Activated CD4-positive, alpha-beta memory T cell treated with anti-CD3 and anti-CD28 coated beads, Interleukin-2, amount 10 ng/mL, durations not matched to agents 7 days and 5 days (primary cell): ENCODE measurements at regions of chr11 and their contacts with region 1.

Region 1: GRCh38 chr11:10307442-10308207 is 2.8 kb downstream of the ADM start:
- DNase-seq: peak; percentile 82
- H3K4me3 Mint-ChIP-seq: peak overlapping the region; percentile 94
- H3K27ac Mint-ChIP-seq: peak overlapping the region; percentile 72
- H3K4me1 Mint-ChIP-seq: peaks cover 65% of the 10 kb centered on the region
- H3K27me3 Mint-ChIP-seq: peaks cover 72% of the 10 kb centered on the region

Region 2: GRCh38 chr11:9757809-9758636 is 549.6 kb before region 1 on chr11:
- CTCF ChIA-PET with region 1: interaction called, 27 read pairs
- POLR2A ChIA-PET with region 1: interaction called, 14 read pairs
- DNase-seq: peak; percentile 91
- H3K4me3 Mint-ChIP-seq: peak overlapping the region; percentile 70
- H3K27ac Mint-ChIP-seq: peak overlapping the region; percentile 44
- H3K4me1 Mint-ChIP-seq: peaks cover 44% of the 10 kb centered on the region
- H3K27me3 Mint-ChIP-seq: no peaks in the 10 kb centered on the region

Region 3: DNA sequence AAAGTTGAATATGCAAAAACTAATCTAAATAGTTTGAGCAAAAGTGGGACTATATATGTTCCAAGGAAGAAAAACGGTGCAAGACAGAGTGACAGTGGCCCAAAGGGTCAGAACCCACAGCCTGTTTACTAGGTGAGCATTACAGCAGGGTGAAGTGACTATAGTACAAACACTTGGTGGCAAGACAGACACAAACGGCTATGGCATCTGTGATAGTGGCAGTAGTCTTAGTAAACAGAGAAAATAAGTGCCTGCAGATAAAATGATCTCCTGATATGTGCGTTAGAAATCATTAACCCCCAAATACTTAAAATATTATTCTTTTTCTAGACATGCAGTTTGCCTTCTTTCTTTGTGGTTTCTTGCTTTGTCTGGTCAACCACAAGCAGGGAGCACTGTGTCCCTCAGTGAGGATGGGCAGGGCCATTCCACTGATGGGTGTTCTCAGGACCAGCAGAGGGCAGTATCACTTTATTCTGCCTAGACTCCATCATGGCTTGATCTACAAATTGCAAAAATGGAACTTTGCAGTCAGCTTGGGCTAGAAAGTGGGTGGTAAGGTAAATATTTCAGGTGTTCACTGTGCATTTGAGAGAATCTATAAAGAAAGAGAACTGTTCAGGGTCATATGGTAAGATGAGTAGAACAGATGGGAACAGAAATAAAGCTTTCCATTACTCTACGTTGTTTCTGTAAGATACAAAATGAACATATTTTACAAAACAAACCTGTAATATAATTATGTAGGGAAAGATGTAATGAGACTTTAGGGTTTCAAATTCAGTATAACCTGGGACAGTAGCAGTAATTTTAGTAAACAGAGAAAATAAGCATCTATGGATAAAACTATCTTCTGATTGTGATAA is 445.5 kb before region 1 on chr11:
- CTCF ChIA-PET with region 1: interaction called, 10 read pairs
- POLR2A ChIA-PET with region 1: no interaction called
- DNase-seq: peak; percentile 51
- H3K4me3 Mint-ChIP-seq: no peak overlapping the region
- H3K27ac Mint-ChIP-seq: no peak overlapping the region
- H3K4me1 Mint-ChIP-seq: peaks cover 32% of the 10 kb centered on the region
- H3K27me3 Mint-ChIP-seq: no peaks in the 10 kb centered on the region

Region 4: GRCh38 chr11:10208131-10208575 is 99.5 kb before region 1 on chr11:
- CTCF ChIA-PET with region 1: interaction called, 81 read pairs
- POLR2A ChIA-PET with region 1: interaction called, 3 read pairs
- DNase-seq: no peak
- H3K4me3 Mint-ChIP-seq: no peak overlapping the region
- H3K27ac Mint-ChIP-seq: no peak overlapping the region
- H3K4me1 Mint-ChIP-seq: no peaks in the 10 kb centered on the region
- H3K27me3 Mint-ChIP-seq: peaks cover 9% of the 10 kb centered on the region

Region 5: GRCh38 chr11:10322830-10323792 is 15.5 kb after region 1 on chr11:
- CTCF ChIA-PET with region 1: interaction called, 14 read pairs
- POLR2A ChIA-PET with region 1: no interaction called
- DNase-seq: peak; percentile 45
- H3K4me3 Mint-ChIP-seq: no peak overlapping the region
- H3K27ac Mint-ChIP-seq: no peak overlapping the region
- H3K4me1 Mint-ChIP-seq: peaks cover 7% of the 10 kb centered on the region
- H3K27me3 Mint-ChIP-seq: peaks cover 14% of the 10 kb centered on the region

Region 6: DNA sequence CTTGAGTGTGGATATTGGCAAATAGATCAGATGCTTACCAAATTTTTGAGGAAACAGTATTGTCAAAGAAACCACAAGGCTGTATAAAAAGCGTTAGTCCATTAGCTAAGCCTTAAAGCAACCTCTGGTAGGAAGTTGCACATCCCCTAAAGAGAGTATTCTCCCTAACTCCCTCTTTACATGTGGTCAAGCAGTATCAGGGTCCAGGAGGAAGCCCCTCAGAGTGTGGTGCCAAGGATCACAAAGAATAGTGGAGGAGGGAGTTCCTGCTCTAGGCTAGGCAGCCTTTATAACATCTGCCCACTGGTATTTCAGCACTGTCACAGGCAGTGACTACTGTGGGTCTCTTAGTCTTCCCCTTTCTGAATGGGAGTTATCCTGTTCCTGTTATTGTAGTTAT is 128.6 kb after region 1 on chr11:
- CTCF ChIA-PET with region 1: no interaction called
- POLR2A ChIA-PET with region 1: no interaction called
- DNase-seq: no peak
- H3K4me3 Mint-ChIP-seq: no peak overlapping the region
- H3K27ac Mint-ChIP-seq: no peak overlapping the region
- H3K4me1 Mint-ChIP-seq: peaks cover 16% of the 10 kb centered on the region
- H3K27me3 Mint-ChIP-seq: peaks cover 14% of the 10 kb centered on the region